Lower lobe of right lung (tissue), 2 donors: ENCODE measurements at regions of chr11 and their contacts with region 1.

Region 1: DNA sequence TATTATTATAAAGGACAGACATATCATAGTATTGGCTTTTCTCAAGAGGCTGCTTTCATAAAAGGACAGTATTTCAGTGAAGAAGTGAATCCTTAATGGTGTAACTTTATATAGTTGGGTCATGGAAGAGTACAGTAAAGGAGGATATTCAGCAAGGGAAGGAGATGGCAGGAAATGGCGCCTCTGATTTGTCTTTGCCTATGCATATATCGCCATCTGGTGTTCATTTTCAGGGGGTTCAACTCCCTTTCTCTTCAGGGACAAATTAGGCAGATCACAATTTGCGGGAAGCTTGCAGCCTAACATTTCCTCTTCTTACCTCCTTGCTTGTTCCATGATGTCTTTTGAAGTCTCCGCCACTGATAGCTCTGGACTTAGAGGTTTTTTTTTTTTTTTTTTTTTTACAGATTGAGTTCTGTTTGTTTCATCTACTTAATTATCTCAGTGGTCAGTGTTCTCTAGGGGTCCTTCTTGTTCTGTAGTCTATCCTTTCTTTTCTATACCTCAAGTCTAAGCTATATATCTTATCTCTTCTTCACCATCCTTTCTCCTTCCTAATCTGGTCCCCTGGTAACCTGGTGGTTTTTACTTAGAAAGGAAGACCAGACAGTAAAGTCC is 21.8 kb upstream of the RRM1 start:
- DNase-seq: no peak
- ATAC-seq: peak; percentile 86 to 93
- H3K4me3 ChIP-seq: no peak overlapping the region
- H3K27ac ChIP-seq: no peak overlapping the region
- H3K4me1 ChIP-seq: peaks cover 24% of the 10 kb centered on the region
- H3K27me3 ChIP-seq: no peaks in the 10 kb centered on the region
- CTCF ChIP-seq: peak; percentile 81

Region 2: DNA sequence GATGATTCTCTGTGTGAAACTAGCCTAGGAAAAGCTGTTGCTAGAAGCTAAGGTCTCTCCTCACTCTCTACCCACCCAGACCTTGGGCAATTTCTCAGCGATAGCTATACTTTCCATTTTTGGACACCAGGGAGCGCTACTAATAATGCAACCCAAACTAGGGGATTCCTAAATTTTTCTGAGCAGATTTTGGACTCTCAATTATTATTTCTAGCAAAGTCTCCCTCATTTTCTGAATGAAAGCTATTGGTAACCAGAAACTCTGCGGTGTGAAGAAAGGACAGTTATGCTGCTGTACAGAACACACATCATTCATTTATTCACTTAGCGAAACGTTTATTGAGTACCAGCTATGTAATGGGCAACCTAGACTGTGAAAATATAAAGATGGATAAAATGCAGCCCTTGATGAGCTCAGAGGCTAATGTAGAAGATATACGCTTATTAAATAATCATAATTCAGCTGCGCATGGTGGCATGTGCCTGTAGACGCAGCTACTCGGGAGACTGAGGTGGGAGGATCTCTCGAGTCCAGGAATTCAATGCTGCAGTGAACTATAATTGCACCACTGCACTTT is 223.4 kb before region 1 on chr11:
- intact Hi-C with region 1: loop called (anchors 5 kb)
- DNase-seq: no peak
- ATAC-seq: peak; percentile 74 to 77
- H3K4me3 ChIP-seq: no peak overlapping the region
- H3K27ac ChIP-seq: no peak overlapping the region
- H3K4me1 ChIP-seq: peaks cover 9% of the 10 kb centered on the region
- H3K27me3 ChIP-seq: no peaks in the 10 kb centered on the region
- CTCF ChIP-seq: peak; percentile 70

Region 3: DNA sequence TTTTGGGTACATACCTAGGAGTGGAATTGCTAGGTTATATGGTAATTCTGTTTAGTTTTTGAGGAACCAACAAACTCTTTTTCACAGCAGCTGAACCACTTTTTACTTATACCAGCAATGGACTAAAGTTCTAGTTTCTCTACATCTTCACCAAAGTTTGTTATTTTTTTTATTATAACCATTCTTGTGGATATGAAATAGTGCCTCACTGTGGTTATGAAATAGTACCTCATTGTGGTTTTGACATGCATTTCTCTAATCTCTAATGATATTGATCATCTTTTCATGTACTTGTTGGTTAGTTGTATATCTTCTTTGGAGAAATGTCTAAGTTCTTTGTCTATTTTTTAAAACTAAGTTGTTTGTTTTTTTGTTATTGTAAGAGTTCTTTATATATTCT is 190.1 kb before region 1 on chr11:
- intact Hi-C with region 1: no loop called
- DNase-seq: no peak
- ATAC-seq: no peak
- H3K4me3 ChIP-seq: no peak overlapping the region
- H3K27ac ChIP-seq: no peak overlapping the region
- H3K4me1 ChIP-seq: peaks cover 23% of the 10 kb centered on the region
- H3K27me3 ChIP-seq: no peaks in the 10 kb centered on the region
- CTCF ChIP-seq: no peak